ENCODE measurements at regions of chr11 and their contacts with region 1.

Region 1: DNA sequence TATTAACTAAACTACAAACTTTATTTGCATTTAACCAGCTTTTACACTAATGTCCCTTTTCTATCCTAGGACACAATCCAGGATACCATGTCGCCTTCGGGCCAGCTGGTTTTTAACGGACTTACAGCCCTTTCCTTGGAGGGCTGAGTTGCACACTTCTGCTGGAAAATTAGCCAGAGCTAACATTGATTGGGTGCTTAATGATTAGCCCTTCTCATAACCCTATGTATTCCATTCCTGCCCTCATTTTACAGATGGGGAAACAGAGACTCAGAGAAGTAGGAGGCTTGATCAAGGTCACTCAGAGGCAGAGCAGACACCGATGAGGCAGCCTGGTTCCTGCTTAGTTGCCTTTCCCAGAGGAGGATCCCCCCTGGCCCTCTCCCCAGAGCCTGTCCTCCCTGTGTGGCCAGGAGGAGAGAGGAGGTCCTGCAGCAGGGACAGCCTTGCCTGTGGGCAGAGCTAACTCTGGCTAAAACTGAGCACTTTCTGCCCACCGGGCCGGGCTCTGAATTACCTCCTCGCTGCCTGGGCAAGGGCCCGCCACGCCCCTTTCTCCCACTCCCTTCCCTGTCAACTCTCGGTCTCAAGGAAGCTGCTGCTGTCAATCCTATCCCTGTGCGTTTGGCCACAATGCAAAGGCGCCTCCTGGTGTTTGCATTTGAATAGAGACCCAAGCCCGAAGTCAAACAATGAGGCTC is 59.6 kb upstream of the PAX6 start:
- DNase-seq: peak; percentile 67
- ATAC-seq: peak; percentile 48
- H3K4me3 ChIP-seq: no peak overlapping the region
- H3K27ac ChIP-seq: no peak overlapping the region
- H3K4me1 ChIP-seq: peaks cover 35% of the 10 kb centered on the region
- H3K27me3 ChIP-seq: no peaks in the 10 kb centered on the region
- CTCF ChIP-seq: peak; percentile 81

Region 2: GRCh38 chr11:31487848-31488247 is 382.9 kb before region 1 on chr11:
- CTCF ChIA-PET with region 1: interaction called, 3 read pairs
- POLR2A ChIA-PET with region 1: no interaction called
- intact Hi-C with region 1: loop called (anchors 1 kb)
- DNase-seq: peak; percentile 70
- ATAC-seq: peak; percentile 59
- H3K4me3 ChIP-seq: no peak overlapping the region
- H3K27ac ChIP-seq: no peak overlapping the region
- H3K4me1 ChIP-seq: no peaks in the 10 kb centered on the region
- H3K27me3 ChIP-seq: no peaks in the 10 kb centered on the region
- CTCF ChIP-seq: peak; percentile 72

Region 3: DNA sequence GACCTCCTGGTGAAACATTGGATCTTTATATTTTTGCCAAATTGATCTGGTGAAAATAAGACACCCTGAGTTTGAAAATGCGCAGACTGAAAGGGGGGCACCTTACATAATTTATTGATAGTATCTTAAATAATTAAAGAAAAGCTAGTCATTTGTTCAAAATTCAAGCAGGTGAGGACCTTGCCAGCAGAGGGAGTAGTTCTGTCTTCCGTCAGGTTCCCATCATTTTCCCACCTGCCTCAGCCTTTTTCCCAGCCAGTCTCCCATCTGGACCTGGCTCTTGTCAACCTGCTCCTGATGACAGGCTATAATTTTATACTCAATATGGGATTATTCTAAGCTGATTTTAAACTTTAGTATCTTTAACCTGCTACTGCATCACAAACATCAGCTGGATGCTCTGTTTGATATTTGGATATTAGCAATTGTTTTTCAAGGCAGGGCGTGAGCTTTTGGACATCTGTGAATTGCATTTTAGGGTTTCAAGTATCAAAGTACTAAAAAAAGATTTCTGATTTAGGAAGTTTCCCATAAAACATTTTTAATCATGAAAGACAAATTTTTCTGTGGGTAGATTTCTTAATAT is 229.2 kb before region 1 on chr11:
- CTCF ChIA-PET with region 1: interaction called, 6 read pairs
- POLR2A ChIA-PET with region 1: interaction called, 5 read pairs
- intact Hi-C with region 1: loop called (anchors 1 kb)
- DNase-seq: peak; percentile 70
- ATAC-seq: no peak
- H3K4me3 ChIP-seq: no peak overlapping the region
- H3K27ac ChIP-seq: no peak overlapping the region
- H3K4me1 ChIP-seq: peaks cover 28% of the 10 kb centered on the region
- H3K27me3 ChIP-seq: no peaks in the 10 kb centered on the region
- CTCF ChIP-seq: peak; percentile 72

Region 4: GRCh38 chr11:31844351-31844750 is 26.4 kb before region 1 on chr11:
- CTCF ChIA-PET with region 1: no interaction called
- POLR2A ChIA-PET with region 1: no interaction called
- intact Hi-C with region 1: no loop called
- DNase-seq: no peak
- ATAC-seq: no peak
- H3K4me3 ChIP-seq: no peak overlapping the region
- H3K27ac ChIP-seq: no peak overlapping the region
- H3K4me1 ChIP-seq: no peaks in the 10 kb centered on the region
- H3K27me3 ChIP-seq: no peaks in the 10 kb centered on the region; the same call in 1 of the 2 replicates
- CTCF ChIP-seq: no peak

Region 5: DNA sequence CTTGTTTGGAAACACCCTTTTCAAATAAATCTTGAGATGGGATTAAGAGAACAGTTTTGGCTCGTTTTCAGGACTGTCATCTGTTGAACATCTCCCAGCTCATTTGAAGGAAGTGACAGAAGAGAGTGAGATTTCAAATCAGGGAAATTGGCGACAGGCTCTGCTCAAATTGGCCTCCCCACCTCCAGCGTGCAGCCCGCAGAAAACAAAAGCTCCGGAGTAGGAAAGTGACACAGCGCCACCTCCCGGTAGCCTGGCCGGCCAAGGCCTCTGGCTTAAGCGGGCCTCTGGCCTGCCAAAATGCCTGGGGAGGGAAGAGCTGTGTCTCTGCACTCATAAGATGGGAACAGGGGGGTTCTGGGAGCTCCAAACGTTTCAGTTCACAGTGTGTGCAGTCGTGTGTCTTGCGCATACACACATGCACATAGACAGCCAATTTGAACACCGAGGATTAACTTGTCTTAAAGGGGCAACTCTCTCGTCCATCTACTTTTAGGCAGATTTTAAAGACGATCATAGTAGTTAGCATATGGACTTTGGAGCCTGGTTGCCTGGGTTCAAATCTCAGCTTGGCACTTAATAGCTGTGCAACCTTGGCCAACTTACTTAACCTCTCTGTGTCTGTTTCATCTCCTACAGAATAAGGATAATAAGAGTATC is 87.4 kb after region 1 on chr11:
- CTCF ChIA-PET with region 1: no interaction called
- POLR2A ChIA-PET with region 1: no interaction called
- intact Hi-C with region 1: loop called (anchors 5 kb)
- DNase-seq: peak; percentile 77
- ATAC-seq: peak; percentile 61
- H3K4me3 ChIP-seq: no peak overlapping the region
- H3K27ac ChIP-seq: no peak overlapping the region
- H3K4me1 ChIP-seq: peaks cover 16% of the 10 kb centered on the region
- H3K27me3 ChIP-seq: no peaks in the 10 kb centered on the region
- CTCF ChIP-seq: peak; percentile 88

Region 6: GRCh38 chr11:31968461-31969358 is 98.0 kb after region 1 on chr11:
- CTCF ChIA-PET with region 1: no interaction called
- POLR2A ChIA-PET with region 1: no interaction called
- intact Hi-C with region 1: no loop called
- DNase-seq: peak; percentile 78
- ATAC-seq: peak; percentile 93
- H3K4me3 ChIP-seq: peak overlapping the region; percentile 42; the same call in 1 of the 2 replicates
- H3K27ac ChIP-seq: no peak overlapping the region
- H3K4me1 ChIP-seq: peaks cover 6% of the 10 kb centered on the region
- H3K27me3 ChIP-seq: no peaks in the 10 kb centered on the region
- CTCF ChIP-seq: no peak

Region 7: DNA sequence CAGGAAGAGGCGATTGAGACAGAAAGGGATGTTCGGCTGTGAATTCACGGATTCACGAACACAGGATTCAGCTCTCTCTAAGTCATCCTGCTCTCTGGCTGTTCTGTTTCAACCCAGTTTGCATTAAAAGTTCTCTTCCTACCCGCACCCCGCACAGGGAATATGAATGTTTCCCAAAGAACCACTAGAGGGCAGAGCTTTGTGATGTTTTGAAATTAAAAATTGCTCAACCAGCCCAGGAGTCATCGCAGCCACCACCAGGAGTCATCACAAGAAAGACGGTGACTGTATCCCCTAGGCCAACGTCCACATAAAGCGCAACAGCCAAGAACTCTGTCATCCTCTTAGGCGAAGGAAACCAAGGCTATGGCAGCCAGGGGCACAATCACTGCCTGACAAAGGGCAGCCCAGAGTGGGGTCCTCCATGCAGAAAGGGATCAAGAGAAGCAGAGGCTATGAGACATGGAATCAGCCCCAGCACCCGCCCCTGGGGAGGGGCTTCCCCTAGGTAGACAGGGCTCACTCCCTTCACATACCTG is 442.2 kb after region 1 on chr11:
- CTCF ChIA-PET with region 1: no interaction called
- POLR2A ChIA-PET with region 1: interaction called, 11 read pairs
- intact Hi-C with region 1: no loop called
- DNase-seq: peak; percentile 83
- ATAC-seq: peak; percentile 80
- H3K4me3 ChIP-seq: peak overlapping the region; percentile 57
- H3K27ac ChIP-seq: peak overlapping the region; percentile 75
- H3K4me1 ChIP-seq: peaks cover 34% of the 10 kb centered on the region
- H3K27me3 ChIP-seq: no peaks in the 10 kb centered on the region
- CTCF ChIP-seq: peak; percentile 90